ENCODE measurements at regions of chr16 and their contacts with region 1.

Region 1: DNA sequence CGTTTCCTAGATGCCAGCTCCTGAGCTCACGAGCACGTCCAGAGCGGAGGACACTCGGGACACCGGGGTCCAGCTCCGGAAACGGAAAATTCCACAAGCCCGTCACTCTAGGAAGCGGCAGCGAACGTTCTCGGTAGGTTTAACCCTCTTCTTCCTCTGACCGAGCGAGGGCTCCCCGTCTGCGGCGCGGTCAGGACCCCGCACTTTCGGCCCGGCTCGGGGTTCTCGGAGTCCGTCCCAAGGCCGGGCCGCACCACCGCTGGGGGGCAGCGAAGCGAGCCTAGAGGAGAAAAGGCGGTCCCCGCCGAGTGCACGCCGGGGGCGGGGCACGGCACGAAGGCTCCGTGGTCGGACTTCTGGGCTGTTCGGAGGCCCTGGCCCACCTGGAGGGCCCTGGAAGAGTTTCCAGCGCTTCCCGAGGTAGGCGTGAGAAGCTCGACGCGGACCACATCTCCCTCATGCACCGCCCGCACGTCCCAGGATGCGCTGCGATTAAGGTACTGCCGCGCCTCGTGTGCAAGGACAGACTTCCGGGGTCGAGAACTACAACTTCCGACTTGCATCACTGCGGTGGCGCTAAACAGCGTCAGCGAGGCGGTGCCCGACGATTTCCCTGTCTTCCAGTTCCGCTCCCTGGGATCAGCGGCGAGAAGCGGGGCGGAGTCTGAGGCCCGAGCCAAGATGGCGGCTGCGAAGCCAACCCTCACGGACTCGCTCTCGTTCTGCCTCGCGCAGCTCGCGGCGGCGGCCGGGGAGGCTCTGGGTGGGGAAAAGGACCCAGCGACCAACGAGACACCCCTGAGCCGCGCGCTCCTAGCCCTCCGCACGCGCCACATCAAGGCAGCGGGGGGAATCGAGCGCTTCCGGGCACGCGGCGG is at the start of gene ARMC5:
- DNase-seq: peak; percentile 98
- H3K4me3 Mint-ChIP-seq: peak within 1 kb of the TSS; percentile 87
- H3K27ac Mint-ChIP-seq: peak within 1 kb of the TSS; percentile 94
- H3K4me1 Mint-ChIP-seq: peaks cover 48% of the 10 kb centered on the region
- H3K27me3 Mint-ChIP-seq: no peaks in the 10 kb centered on the region
- total RNA-seq, gene ARMC5: 5.5 to 6.4 TPM

Region 2: GRCh38 chr16:31440516-31441184 is 18.4 kb before region 1 on chr16:
- CTCF ChIA-PET with region 1: interaction called, 16 read pairs
- POLR2A ChIA-PET with region 1: interaction called, 6 read pairs
- intact Hi-C with region 1: no loop called
- DNase-seq: no peak
- H3K4me3 Mint-ChIP-seq: no peak overlapping the region
- H3K27ac Mint-ChIP-seq: no peak overlapping the region
- H3K4me1 Mint-ChIP-seq: peaks cover 17% of the 10 kb centered on the region
- H3K27me3 Mint-ChIP-seq: no peaks in the 10 kb centered on the region

Region 3: GRCh38 chr16:31476303-31477219 is 17.5 kb after region 1 on chr16:
- CTCF ChIA-PET with region 1: interaction called, 24 read pairs
- POLR2A ChIA-PET with region 1: interaction called, 7 read pairs
- intact Hi-C with region 1: loop called (anchors 1 kb)
- DNase-seq: peak; percentile 94
- H3K4me3 Mint-ChIP-seq: peak overlapping the region; percentile 75
- H3K27ac Mint-ChIP-seq: peak overlapping the region; percentile 51
- H3K4me1 Mint-ChIP-seq: peaks cover 18% of the 10 kb centered on the region
- H3K27me3 Mint-ChIP-seq: peaks cover 12% of the 10 kb centered on the region

Region 4: DNA sequence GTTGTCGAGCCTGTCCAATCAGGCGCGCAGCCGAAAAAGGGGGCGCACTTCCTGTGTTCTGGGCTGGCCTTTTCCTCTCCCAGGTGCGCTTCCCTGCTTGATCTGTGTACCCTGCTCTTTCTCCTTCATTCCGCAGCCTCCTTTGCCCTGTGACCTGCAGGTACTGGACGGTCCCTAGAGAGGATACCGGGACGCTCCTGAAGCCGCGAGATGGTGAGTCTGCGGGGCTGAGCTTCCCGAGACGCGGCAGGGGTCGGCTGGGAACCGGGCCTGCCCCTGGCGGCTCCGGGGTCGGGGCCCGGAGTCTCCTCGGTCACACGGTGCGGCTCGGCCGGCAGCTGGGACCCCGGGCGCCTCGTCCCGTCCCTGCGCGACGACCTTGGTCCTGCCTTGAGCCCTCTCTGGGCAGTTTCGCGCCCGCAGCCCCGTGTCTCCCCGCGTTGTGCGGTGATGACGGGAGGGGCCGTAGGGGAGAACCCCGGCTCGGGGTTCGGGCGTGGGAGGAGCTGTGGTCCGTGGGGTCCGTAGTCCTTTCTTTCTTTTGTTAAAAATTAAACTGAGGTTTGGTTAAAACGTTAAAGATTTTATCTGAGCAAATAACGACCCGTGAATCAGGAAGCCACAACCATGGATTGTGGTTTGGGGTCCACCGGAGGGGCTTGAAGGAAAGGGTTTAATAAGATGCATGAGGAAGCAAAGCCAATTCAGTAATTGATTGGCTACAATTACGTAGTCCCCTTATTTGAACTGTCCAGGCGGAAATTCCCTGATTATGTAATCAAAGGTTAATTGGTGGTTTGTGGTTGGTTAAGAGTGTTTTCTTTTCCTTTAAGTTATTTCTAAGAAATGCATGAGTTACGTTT is 241.7 kb after region 1 on chr16:
- CTCF ChIA-PET with region 1: interaction called, 5 read pairs
- POLR2A ChIA-PET with region 1: no interaction called
- intact Hi-C with region 1: loop called (anchors 2 kb)
- DNase-seq: peak; percentile 92
- H3K4me3 Mint-ChIP-seq: peak overlapping the region; percentile 90
- H3K27ac Mint-ChIP-seq: peak overlapping the region; percentile 93
- H3K4me1 Mint-ChIP-seq: peaks cover 28% of the 10 kb centered on the region
- H3K27me3 Mint-ChIP-seq: no peaks in the 10 kb centered on the region

Region 5: GRCh38 chr16:31873556-31874365 is 414.7 kb after region 1 on chr16 and contains the start of gene ZNF267:
- CTCF ChIA-PET with region 1: interaction called, 41 read pairs
- POLR2A ChIA-PET with region 1: interaction called, 18 read pairs
- intact Hi-C with region 1: loop called (anchors 1 kb)
- DNase-seq: peak; percentile 96
- H3K4me3 Mint-ChIP-seq: peak within 1 kb of the TSS; percentile 90
- H3K27ac Mint-ChIP-seq: peak within 1 kb of the TSS; percentile 99
- H3K4me1 Mint-ChIP-seq: peaks cover 69% of the 10 kb centered on the region
- H3K27me3 Mint-ChIP-seq: no peaks in the 10 kb centered on the region
- total RNA-seq, gene ZNF267: 72.1 to 76.4 TPM

Measured in activated CD4-positive, alpha-beta memory T cell treated with anti-CD3 and anti-CD28 coated beads for 36 hours (primary cell).